Panc1 (cell line): ENCODE measurements at regions of chr3 and their contacts with region 1.

Region 1: DNA sequence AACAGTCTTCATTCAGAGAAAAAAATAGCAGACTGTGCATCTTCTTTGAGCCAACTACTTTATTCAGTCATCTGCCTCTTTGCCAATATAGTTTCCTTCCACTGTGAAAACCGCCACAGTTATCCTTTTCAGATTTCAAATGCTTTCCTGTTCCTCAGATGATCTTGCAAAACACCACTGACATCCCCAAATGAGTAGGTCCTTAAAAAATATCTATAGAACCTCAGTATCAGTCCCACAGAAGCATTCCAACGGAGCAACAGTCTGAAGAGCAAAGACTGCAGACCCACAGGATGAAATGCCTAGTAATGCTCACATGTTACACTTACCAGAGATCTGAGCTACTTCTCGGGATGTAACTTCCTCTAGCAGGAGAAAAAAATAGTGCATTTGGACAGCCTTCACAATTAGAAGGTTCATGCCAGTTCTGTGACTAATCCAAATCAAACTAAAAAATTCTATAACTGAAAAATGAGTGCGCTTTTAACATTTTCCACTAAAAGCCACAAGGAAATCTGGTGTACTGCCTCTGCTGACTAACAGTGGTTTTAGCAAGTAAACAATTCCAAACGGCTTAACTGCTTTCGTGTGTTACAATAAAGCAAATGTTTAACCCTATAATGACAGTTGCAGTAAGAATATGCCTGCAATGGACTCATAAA is at the start of gene ANKRD28:
- DNase-seq: peak; percentile 83
- ATAC-seq: peak; percentile 89
- H3K4me3 ChIP-seq: peak within 1 kb of the TSS; percentile 50 to 80
- H3K27ac ChIP-seq: peak within 1 kb of the TSS; percentile 98
- H3K4me1 ChIP-seq: peaks cover 27% of the 10 kb centered on the region
- H3K27me3 ChIP-seq: no peaks in the 10 kb centered on the region
- CTCF ChIP-seq: peak; percentile 11; the same call in 1 of the 2 replicates
- total RNA-seq, gene ANKRD28: 89.3 TPM

Region 2: GRCh38 chr3:15629860-15630597 is 167.7 kb before region 1 on chr3:
- CTCF ChIA-PET with region 1: no interaction called
- POLR2A ChIA-PET with region 1: no interaction called
- in situ Hi-C with region 1: no loop called
- intact Hi-C with region 1: loop called (anchors 5 kb)
- DNase-seq: peak; percentile 66
- ATAC-seq: peak; percentile 80
- H3K4me3 ChIP-seq: no peak overlapping the region; a peak in 1 of 4 replicates
- H3K27ac ChIP-seq: peak overlapping the region; percentile 99
- H3K4me1 ChIP-seq: peaks cover 53% of the 10 kb centered on the region
- H3K27me3 ChIP-seq: no peaks in the 10 kb centered on the region
- CTCF ChIP-seq: peak; percentile 77

Region 3: DNA sequence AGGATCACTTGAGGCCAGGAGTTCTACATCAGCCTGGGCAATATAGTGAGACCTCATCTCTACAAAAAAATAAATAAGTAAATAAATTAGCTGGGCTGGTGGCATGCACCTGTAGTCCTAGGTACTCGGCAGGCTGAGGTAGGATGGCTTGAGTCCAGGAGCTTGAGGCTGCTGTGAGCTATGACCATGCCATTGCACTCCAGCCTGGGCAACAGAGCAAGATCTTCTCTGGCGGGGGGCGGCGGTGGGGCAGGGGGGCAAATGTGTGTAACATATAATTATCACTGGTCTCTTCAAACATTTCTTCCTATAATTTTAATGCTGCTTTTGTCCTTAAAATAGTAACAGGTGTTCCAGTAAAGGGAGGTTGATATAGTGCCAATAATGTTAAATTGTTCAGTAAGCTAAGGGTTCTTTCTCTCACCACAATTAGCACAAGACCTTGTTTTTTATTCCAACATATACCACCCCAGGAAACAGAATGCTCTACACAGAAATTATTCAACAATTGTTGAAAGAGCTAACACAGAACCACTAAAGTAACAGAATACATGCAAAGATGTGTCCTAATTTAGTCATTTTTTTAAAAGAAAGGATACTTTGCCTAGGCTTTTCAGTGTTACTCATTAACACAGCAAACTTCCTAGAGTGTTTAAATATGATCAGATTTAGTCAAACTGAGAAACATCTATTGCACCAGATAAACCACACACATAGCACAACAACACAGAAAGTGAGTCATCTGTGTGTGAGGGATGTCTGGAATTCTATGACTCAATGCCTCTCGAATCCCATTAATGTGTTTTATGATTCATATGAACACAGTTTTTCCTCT is 29.1 kb before region 1 on chr3:
- CTCF ChIA-PET with region 1: no interaction called
- POLR2A ChIA-PET with region 1: interaction called, 10 read pairs
- in situ Hi-C with region 1: no loop called
- intact Hi-C with region 1: no loop called
- DNase-seq: peak; percentile 83
- ATAC-seq: peak; percentile 91
- H3K4me3 ChIP-seq: no peak overlapping the region
- H3K27ac ChIP-seq: peak overlapping the region; percentile 88
- H3K4me1 ChIP-seq: peaks cover 34% of the 10 kb centered on the region
- H3K27me3 ChIP-seq: no peaks in the 10 kb centered on the region
- CTCF ChIP-seq: no peak

Region 4: GRCh38 chr3:16090024-16090423 is 292.3 kb after region 1 on chr3:
- CTCF ChIA-PET with region 1: no interaction called
- POLR2A ChIA-PET with region 1: interaction called, 19 read pairs
- in situ Hi-C with region 1: no loop called
- intact Hi-C with region 1: no loop called
- DNase-seq: no peak
- ATAC-seq: peak; percentile 53
- H3K4me3 ChIP-seq: no peak overlapping the region
- H3K27ac ChIP-seq: no peak overlapping the region
- H3K4me1 ChIP-seq: no peaks in the 10 kb centered on the region
- H3K27me3 ChIP-seq: no peaks in the 10 kb centered on the region
- CTCF ChIP-seq: no peak